Right ventricle myocardium superior (tissue), 1 donor: ENCODE measurements at regions of chr12 and their contacts with region 1.

Region 1: DNA sequence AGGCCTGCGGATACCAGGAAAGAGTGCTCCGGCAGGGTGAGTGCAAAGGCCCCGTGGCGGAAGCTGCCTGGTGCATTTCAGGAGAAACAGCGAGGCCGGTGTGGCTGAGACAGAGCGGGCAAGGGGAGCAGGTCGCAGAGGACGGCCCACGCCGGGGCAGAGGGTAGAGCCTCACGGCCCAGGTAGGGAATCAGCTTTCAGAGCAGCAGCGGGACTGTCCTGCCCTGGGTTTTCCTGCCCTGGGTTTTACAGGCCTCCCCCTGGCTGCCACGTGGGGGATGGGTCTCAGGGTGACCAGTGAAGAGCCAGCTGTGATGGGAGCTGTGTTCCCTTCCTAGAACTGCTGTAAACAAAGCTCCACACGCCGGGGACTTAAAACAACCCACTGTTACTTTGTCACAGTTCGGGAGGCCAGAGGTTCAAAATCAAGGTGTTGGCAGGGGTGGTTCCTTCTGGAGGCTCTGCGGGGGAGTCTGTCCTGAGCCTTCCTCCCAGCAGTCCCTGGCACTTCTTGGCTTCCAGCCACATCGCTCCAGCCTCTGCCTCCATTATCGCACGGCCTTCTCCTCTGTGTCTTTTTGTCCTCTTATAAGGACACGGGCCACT is 10.4 kb downstream of the NCOR2 start:
- DNase-seq: no peak
- ATAC-seq: peak; percentile 10

Region 2: DNA sequence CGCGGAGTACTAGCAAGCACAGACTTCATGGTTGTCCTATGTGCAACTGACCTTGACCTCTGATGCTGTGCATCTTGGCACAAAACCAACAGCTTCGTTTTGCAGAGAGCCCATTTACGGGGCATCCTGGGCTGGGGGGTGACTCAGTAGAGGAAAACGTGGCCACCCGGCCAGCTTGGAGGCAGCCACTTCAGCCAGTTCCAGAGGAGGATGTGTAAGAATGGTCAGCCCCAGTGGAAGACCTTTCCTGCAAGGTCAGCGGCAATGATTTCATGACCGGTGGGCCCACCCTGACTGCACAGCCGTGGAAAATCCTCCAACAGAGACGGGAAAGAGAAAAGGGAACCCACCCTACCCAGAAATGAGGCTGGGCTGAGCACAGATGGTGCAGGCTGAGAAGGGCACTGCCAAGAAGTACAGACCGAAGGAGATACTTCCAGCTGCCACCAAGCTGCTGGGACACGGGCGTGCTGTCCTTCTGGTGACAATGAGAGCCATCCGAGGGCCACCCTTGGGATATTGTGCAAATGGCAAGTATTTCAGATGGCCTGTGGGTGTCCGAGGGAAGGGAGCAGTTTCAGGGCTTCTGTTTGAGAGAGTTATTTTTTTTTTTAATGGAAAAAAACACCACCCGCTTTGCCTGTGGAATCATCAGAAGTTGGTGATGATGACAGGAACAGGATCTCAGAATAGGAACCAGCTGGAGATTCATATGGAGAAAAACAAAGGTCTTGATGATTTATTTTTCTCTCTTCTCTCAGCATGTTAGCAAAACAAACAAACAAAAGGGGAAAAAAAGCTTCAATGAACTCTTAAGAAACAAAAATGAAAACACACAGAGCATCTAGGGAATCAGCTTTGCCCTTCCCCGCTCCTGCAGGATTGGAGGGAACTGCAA is 382.3 kb before region 1 on chr12:
- intact Hi-C with region 1: no loop called
- DNase-seq: no peak
- ATAC-seq: no peak

Region 3: GRCh38 chr12:124518051-124518932 is 38.7 kb before region 1 on chr12:
- intact Hi-C with region 1: loop called (anchors 5 kb)
- DNase-seq: peak; percentile 99
- ATAC-seq: peak; percentile 78